ENCODE measurements at regions of chr16 and their contacts with region 1.

Region 1: DNA sequence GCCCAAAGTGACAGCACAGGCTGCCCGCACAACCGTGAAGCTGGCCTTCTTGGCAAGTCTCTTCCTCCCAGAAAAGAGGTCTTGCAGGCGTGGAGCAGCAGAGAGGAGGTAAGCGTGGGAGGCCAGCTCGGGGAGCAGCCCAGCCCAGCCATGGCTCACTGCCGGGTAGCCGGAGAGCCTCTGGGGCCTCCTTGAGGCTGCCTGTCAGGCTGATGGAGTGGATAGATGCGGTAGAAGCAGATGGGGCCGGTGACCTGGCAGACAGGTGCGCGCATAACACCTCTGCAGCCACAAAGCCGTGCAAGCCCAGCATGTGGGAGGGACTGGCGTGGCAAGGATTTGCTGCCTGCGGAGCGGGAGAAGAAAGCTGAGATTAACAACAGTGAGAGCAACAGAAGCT is 17.1 kb upstream of the DOK4 start:
- DNase-seq: no peak
- H3K4me3 ChIP-seq: no peak overlapping the region
- H3K27ac ChIP-seq: no peak overlapping the region
- H3K27me3 ChIP-seq: peaks cover 60% of the 10 kb centered on the region
- CTCF ChIP-seq: no peak

Region 2: GRCh38 chr16:56311208-56312027 is 1191.9 kb before region 1 on chr16:
- CTCF ChIA-PET with region 1: no interaction called
- POLR2A ChIA-PET with region 1: no interaction called
- DNase-seq: no peak
- H3K4me3 ChIP-seq: no peak overlapping the region
- H3K27ac ChIP-seq: no peak overlapping the region
- H3K27me3 ChIP-seq: peaks cover 10% of the 10 kb centered on the region
- CTCF ChIP-seq: no peak; the same call in 1 of the 2 replicates

Region 3: GRCh38 chr16:57447186-57447962 is 56.0 kb before region 1 on chr16 and contains the starts of genes CIAPIN1 and COQ9:
- CTCF ChIA-PET with region 1: no interaction called
- POLR2A ChIA-PET with region 1: no interaction called
- DNase-seq: peak; percentile 77
- H3K4me3 ChIP-seq: peak within 1 kb of the TSS; percentile 92
- H3K27ac ChIP-seq: peak within 1 kb of the TSS; percentile 65
- H3K27me3 ChIP-seq: no peaks in the 10 kb centered on the region
- CTCF ChIP-seq: no peak
- polyA plus RNA-seq, gene CIAPIN1: 48.6 and 49.7 TPM in 2 replicates
- polyA plus RNA-seq, gene COQ9: 59.0 and 60.3 TPM in 2 replicates

Region 4: GRCh38 chr16:57519796-57520360 is 16.5 kb after region 1 on chr16:
- CTCF ChIA-PET with region 1: interaction called, 26 read pairs
- POLR2A ChIA-PET with region 1: no interaction called
- DNase-seq: no peak
- H3K4me3 ChIP-seq: no peak overlapping the region
- H3K27ac ChIP-seq: no peak overlapping the region
- H3K27me3 ChIP-seq: no peaks in the 10 kb centered on the region
- CTCF ChIP-seq: peak; percentile 99

Region 5: GRCh38 chr16:58551496-58551895 is 1048.1 kb after region 1 on chr16:
- CTCF ChIA-PET with region 1: no interaction called
- POLR2A ChIA-PET with region 1: no interaction called
- DNase-seq: no peak
- H3K4me3 ChIP-seq: no peak overlapping the region
- H3K27ac ChIP-seq: no peak overlapping the region
- H3K27me3 ChIP-seq: no peaks in the 10 kb centered on the region
- CTCF ChIP-seq: no peak